ENCODE measurements at regions of chr3 and their contacts with region 1.

Region 1: DNA sequence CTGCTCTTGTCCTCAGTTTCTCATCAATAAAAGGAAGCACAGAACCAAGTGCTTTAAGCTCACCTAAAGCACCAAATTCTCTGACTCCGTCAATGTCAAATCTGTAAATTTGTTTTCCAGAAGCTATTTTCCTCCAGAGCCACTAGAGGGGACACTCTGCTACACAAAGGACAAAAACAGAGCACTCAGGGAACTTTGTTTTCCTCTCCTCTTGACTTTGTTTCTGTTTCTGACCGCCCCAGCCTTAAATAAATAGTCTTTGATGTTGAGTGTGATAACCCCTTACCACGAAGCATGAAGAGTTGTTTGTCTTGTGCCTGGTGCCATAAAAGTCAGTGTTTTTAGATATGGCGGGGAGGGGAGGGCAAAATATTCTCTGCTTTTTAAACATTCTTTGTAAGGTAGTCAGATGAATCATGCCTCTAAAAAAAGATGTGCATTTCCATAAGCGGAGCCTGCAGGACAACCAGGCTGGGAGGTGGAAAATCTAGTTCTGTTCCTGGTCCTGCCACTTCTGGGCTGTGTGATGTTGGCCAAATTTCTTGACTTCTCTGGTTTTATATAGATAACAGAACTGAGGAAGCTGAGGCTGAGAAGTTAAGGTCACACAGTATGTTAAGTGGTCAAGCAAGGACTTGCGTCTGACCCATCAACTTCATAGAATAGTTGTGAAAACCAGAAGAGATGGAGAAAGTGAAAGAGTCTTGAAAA is 7.3 kb upstream of the ZBTB38 start:
- DNase-seq: peak; percentile 51 to 66 (median 61)
- H3K4me3 ChIP-seq: peak overlapping the region in 3 of 7 experiments; percentile 3 to 63 (median 16)
- H3K27ac ChIP-seq: no peak overlapping the region
- H3K4me1 ChIP-seq: no peaks in the 10 kb centered on the region
- H3K27me3 ChIP-seq: no peaks in the 10 kb centered on the region

Region 2: GRCh38 chr3:141311496-141312353 is 49.3 kb before region 1 on chr3:
- CTCF ChIA-PET with region 1: interaction called, 29 read pairs
- POLR2A ChIA-PET with region 1: no interaction called
- DNase-seq: peak; percentile 98 to 99 (median 98)
- H3K4me3 ChIP-seq: peak overlapping the region; percentile 82 to 93 (median 85)
- H3K27ac ChIP-seq: peak overlapping the region; percentile 30 to 74
- H3K4me1 ChIP-seq: peaks cover 4 to 21% (median 19%) of the 10 kb centered on the region in 4 experiments
- H3K27me3 ChIP-seq: no peaks in the 10 kb centered on the region

Region 3: GRCh38 chr3:141383555-141384129 is 22.6 kb after region 1 on chr3:
- CTCF ChIA-PET with region 1: interaction called, 11 read pairs
- POLR2A ChIA-PET with region 1: no interaction called
- DNase-seq: no peak
- H3K4me3 ChIP-seq: peak overlapping the region in 3 of 7 experiments; percentile 34 to 54 (median 50)
- H3K27ac ChIP-seq: no peak overlapping the region
- H3K4me1 ChIP-seq: peaks cover 0 to 4% (median 0%) of the 10 kb centered on the region in 4 experiments
- H3K27me3 ChIP-seq: no peaks in the 10 kb centered on the region

Region 4: GRCh38 chr3:141426404-141427034 is 65.5 kb after region 1 on chr3:
- CTCF ChIA-PET with region 1: interaction called, 12 read pairs
- POLR2A ChIA-PET with region 1: no interaction called
- DNase-seq: peak; percentile 42 to 62 (median 58)
- H3K4me3 ChIP-seq: peak overlapping the region in 2 of 7 experiments; percentile 22 to 29
- H3K27ac ChIP-seq: peak overlapping the region in 1 of 2 experiments; percentile 50
- H3K4me1 ChIP-seq: peaks cover 2 to 20% (median 9%) of the 10 kb centered on the region in 4 experiments
- H3K27me3 ChIP-seq: no peaks in the 10 kb centered on the region

Region 5: GRCh38 chr3:141452036-141452435 is 91.0 kb after region 1 on chr3:
- CTCF ChIA-PET with region 1: interaction called, 82 read pairs
- POLR2A ChIA-PET with region 1: no interaction called
- DNase-seq: peak; percentile 86 to 94 (median 93)
- H3K4me3 ChIP-seq: no peak overlapping the region
- H3K27ac ChIP-seq: peak overlapping the region; percentile 2 to 46
- H3K4me1 ChIP-seq: peaks cover 4 to 16% (median 10%) of the 10 kb centered on the region in 4 experiments
- H3K27me3 ChIP-seq: no peaks in the 10 kb centered on the region

Region 6: GRCh38 chr3:141725036-141725435 is 364.0 kb after region 1 on chr3:
- CTCF ChIA-PET with region 1: no interaction called
- POLR2A ChIA-PET with region 1: no interaction called
- DNase-seq: no peak
- H3K4me3 ChIP-seq: no peak overlapping the region
- H3K27ac ChIP-seq: no peak overlapping the region
- H3K4me1 ChIP-seq: no peaks in the 10 kb centered on the region
- H3K27me3 ChIP-seq: no peaks in the 10 kb centered on the region